Esophagus muscularis mucosa (tissue), 4 donors: ENCODE measurements at regions of chr11 and their contacts with region 1.

Region 1: GRCh38 chr11:124800226-124800929 is at the start of gene MSANTD2:
- DNase-seq: peak; percentile 94
- H3K4me3 ChIP-seq: peak within 1 kb of the TSS; percentile 93 to 97 (median 94)
- H3K27ac ChIP-seq: peak within 1 kb of the TSS; percentile 97 to 98 (median 98)
- H3K4me1 ChIP-seq: peaks cover 27 to 47% (median 35%) of the 10 kb centered on the region in 4 donors
- H3K27me3 ChIP-seq: no peaks in the 10 kb centered on the region
- CTCF ChIP-seq: no peak
- EP300 ChIP-seq: no peak
- POLR2A ChIP-seq: peak; percentile 81
- total RNA-seq, gene MSANTD2: 9.6 to 14.0 (median 12.1) TPM

Region 2: GRCh38 chr11:124763156-124763947 is 37.0 kb before region 1 on chr11:
- intact Hi-C with region 1: loop called (anchors 5 kb)
- DNase-seq: peak; percentile 93
- H3K4me3 ChIP-seq: peak overlapping the region; percentile 52 to 65 (median 54)
- H3K27ac ChIP-seq: peak overlapping the region; percentile 69 to 82 (median 82)
- H3K4me1 ChIP-seq: peaks cover 26 to 53% (median 43%) of the 10 kb centered on the region in 4 donors
- H3K27me3 ChIP-seq: peaks cover 5 to 48% (median 38%) of the 10 kb centered on the region in 4 donors
- CTCF ChIP-seq: peak; percentile 60 to 76 (median 63)
- EP300 ChIP-seq: no peak
- POLR2A ChIP-seq: no peak